CD8-positive, alpha-beta T cell (primary cell): ENCODE measurements at regions of chr19 and their contacts with region 1.

Region 1: DNA sequence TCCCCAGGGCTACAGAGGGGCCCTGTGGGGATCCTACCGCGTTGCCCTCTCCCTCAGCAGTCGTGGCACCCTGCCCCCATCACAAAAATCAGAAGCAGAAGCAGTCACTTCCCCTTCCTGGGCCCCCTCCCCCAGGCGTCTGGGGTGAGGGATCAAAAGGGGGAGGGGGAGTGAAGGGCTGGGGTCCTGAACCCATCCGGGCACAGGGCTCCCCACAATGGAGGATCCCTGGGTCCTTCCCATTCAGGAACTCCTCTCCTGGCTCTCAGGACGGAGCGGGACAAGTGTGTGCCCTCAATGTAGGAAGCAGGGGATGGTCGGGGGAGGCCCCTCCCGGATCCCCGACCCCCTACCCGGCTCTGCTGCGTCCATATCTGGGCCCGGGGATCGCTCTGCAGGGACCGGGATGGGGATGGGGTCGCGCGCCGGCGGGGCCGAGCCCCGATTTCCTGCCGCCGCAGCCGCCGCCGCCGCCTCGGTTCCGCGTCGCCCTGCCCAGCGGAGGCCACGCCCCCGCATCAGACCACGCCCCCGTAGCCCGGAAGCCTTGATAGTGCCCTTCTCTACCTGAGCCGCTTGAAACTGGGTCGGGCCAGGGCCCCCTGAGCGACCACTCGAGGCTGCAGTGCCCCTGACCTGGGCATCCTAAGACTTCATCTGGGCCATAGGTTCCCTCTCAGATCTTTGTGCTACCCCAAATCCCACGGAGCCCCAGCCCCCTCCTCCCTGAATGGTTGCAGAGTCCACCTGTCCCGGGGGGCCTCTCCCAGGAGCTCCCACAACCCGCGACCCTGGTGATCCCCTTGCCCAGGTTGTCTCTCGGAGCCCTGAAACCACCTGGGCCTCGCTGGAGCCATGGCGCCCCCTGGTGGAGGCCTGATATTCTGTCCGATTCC is at the start of gene GMIP:
- DNase-seq: peak; percentile 79 to 96 (median 91)
- ATAC-seq: peak; percentile 93
- H3K4me3 ChIP-seq: peak within 1 kb of the TSS; percentile 100
- H3K4me3 Mint-ChIP-seq: peak within 1 kb of the TSS; percentile 95
- H3K27ac ChIP-seq: peak within 1 kb of the TSS; percentile 92 to 93
- H3K27ac Mint-ChIP-seq: peak within 1 kb of the TSS; percentile 93
- H3K4me1 ChIP-seq: peaks cover 20% of the 10 kb centered on the region
- H3K4me1 Mint-ChIP-seq: peaks cover 20% of the 10 kb centered on the region
- H3K27me3 ChIP-seq: no peaks in the 10 kb centered on the region
- H3K27me3 Mint-ChIP-seq: no peaks in the 10 kb centered on the region
- CTCF ChIP-seq: peak; percentile 83
- total RNA-seq, gene GMIP: 82.7 to 85.7 TPM

Region 2: GRCh38 chr19:19531951-19532805 is 111.2 kb before region 1 on chr19:
- CTCF ChIA-PET with region 1: interaction called, 93 read pairs
- POLR2A ChIA-PET with region 1: interaction called, 6 read pairs
- intact Hi-C with region 1: loop called (anchors 1 kb)
- DNase-seq: peak; percentile 70 to 95 (median 87)
- ATAC-seq: peak; percentile 83
- H3K4me3 ChIP-seq: no peak overlapping the region
- H3K4me3 Mint-ChIP-seq: no peak overlapping the region
- H3K27ac ChIP-seq: no peak overlapping the region
- H3K27ac Mint-ChIP-seq: no peak overlapping the region
- H3K4me1 ChIP-seq: peaks cover 9% of the 10 kb centered on the region
- H3K4me1 Mint-ChIP-seq: peaks cover 12% of the 10 kb centered on the region
- H3K27me3 ChIP-seq: no peaks in the 10 kb centered on the region
- H3K27me3 Mint-ChIP-seq: no peaks in the 10 kb centered on the region
- CTCF ChIP-seq: peak; percentile 96

Region 3: DNA sequence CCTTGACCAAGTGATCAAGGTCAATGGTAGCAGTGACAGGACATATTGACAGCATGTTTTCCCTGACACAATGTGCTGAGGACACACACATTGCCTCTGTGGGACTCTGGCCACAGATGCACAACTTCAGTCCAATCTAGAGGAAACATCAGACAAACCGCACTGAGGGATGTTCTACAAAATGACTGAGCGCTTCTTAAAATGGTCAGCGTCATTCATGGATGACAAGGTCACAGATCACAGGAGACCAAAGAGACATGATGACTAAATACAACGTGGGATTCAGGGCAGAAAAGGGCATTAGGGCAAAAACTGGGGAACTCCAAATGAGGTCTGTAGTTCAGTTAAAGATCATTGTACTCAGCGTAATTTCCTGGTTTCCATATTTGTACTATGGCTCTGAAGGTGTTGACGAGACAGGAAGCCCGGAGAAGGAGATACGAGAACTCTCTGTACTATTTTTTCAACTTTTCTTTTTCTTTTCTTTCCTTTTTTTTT is 45.5 kb before region 1 on chr19:
- CTCF ChIA-PET with region 1: no interaction called
- POLR2A ChIA-PET with region 1: no interaction called
- intact Hi-C with region 1: loop called in 1 of 2 experiments (anchors 1 kb)
- DNase-seq: peak in 7 of 9 experiments; percentile 22 to 96 (median 62)
- ATAC-seq: peak; percentile 69
- H3K4me3 ChIP-seq: peak overlapping the region in 1 of 2 experiments; percentile 8
- H3K4me3 Mint-ChIP-seq: peak overlapping the region; percentile 37
- H3K27ac ChIP-seq: peak overlapping the region; percentile 94 to 95
- H3K27ac Mint-ChIP-seq: peak overlapping the region; percentile 99
- H3K4me1 ChIP-seq: peaks cover 58% of the 10 kb centered on the region
- H3K4me1 Mint-ChIP-seq: peaks cover 53% of the 10 kb centered on the region
- H3K27me3 ChIP-seq: no peaks in the 10 kb centered on the region
- H3K27me3 Mint-ChIP-seq: no peaks in the 10 kb centered on the region
- CTCF ChIP-seq: no peak

Region 4: DNA sequence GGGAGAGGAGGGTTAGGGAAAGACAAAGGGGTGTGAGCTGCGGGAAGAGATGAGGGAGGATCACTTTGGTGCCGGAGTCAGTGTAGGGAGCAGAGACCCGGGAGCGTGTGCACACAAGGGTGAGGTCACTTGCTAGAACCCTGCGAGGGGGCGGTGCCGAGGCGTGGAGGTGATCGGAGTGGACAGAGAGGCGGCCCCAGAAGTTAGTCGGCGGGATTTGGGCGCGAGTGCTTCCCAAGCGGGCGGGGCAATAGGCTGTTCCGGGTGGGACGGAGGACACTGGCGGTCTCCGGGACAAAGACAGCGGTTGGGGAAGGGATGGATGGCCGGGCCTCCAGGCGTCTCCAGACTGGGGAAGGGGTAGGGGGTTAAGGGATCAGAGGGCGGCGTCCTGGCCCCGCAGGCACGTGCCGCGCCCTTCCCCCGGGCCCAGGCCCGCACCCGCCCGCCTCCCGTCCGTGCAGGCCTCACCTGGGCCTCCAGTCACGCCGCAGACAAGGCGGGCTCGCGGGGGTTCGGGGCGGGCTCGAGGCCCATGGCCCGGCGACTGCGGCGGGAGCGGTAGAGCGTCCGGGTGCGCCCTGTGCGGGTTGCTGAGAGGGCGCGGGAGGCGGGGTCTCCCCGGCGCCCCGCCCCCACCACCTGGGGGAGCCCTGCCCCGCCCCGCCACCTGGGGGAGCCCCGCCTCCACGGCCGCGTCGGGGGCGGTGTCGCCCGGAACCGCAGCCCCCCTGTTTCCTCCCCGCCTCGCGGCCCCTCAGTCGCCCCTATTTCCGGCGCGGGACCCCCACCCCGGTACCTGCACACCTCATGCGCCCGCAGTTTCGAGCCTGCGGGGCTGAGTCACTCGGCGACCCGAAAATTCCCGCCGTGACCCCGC is 15.5 kb before region 1 on chr19 and contains the start of gene LPAR2:
- CTCF ChIA-PET with region 1: interaction called, 8 read pairs
- POLR2A ChIA-PET with region 1: interaction called, 4 read pairs
- intact Hi-C with region 1: loop called (anchors 1 kb)
- DNase-seq: peak; percentile 54 to 91 (median 85)
- ATAC-seq: peak; percentile 85
- H3K4me3 ChIP-seq: peak within 1 kb of the TSS; percentile 70 to 73
- H3K4me3 Mint-ChIP-seq: peak within 1 kb of the TSS; percentile 88
- H3K27ac ChIP-seq: peak within 1 kb of the TSS; percentile 64 to 71
- H3K27ac Mint-ChIP-seq: peak within 1 kb of the TSS; percentile 94
- H3K4me1 ChIP-seq: peaks cover 28% of the 10 kb centered on the region
- H3K4me1 Mint-ChIP-seq: peaks cover 30% of the 10 kb centered on the region
- H3K27me3 ChIP-seq: no peaks in the 10 kb centered on the region
- H3K27me3 Mint-ChIP-seq: no peaks in the 10 kb centered on the region
- CTCF ChIP-seq: no peak
- total RNA-seq, gene LPAR2: 63.8 to 67.4 TPM

Region 5: DNA sequence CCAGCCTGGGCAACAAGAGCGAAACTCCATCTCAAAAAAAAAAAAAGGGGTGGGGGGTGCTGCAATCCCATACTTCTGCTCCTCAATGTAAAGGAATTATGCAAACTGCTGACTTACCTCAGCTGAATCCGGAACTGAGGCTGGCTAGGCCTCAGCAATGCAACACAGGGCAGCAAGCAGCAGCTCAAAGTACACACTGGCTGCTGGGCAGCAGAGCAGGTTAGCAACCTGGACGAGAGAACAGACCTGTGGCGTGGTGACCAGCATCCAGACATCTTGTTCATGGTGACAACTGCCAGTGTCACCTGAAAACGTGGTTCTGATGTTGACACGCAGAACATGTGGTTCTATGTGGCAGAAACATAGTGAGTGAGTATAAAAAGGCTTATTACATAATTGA is 61.4 kb after region 1 on chr19:
- CTCF ChIA-PET with region 1: no interaction called
- POLR2A ChIA-PET with region 1: no interaction called
- intact Hi-C with region 1: no loop called
- DNase-seq: no peak
- ATAC-seq: no peak
- H3K4me3 ChIP-seq: no peak overlapping the region
- H3K4me3 Mint-ChIP-seq: no peak overlapping the region
- H3K27ac ChIP-seq: no peak overlapping the region
- H3K27ac Mint-ChIP-seq: no peak overlapping the region
- H3K4me1 ChIP-seq: no peaks in the 10 kb centered on the region
- H3K4me1 Mint-ChIP-seq: no peaks in the 10 kb centered on the region
- H3K27me3 ChIP-seq: no peaks in the 10 kb centered on the region
- H3K27me3 Mint-ChIP-seq: no peaks in the 10 kb centered on the region
- CTCF ChIP-seq: no peak

Region 6: GRCh38 chr19:19749117-19749897 is 105.9 kb after region 1 on chr19:
- CTCF ChIA-PET with region 1: no interaction called
- POLR2A ChIA-PET with region 1: no interaction called
- intact Hi-C with region 1: no loop called
- DNase-seq: no peak
- ATAC-seq: no peak
- H3K4me3 ChIP-seq: no peak overlapping the region
- H3K4me3 Mint-ChIP-seq: no peak overlapping the region
- H3K27ac ChIP-seq: no peak overlapping the region
- H3K27ac Mint-ChIP-seq: no peak overlapping the region
- H3K4me1 ChIP-seq: no peaks in the 10 kb centered on the region
- H3K4me1 Mint-ChIP-seq: no peaks in the 10 kb centered on the region
- H3K27me3 ChIP-seq: no peaks in the 10 kb centered on the region
- H3K27me3 Mint-ChIP-seq: no peaks in the 10 kb centered on the region
- CTCF ChIP-seq: no peak